Head of caudate nucleus (tissue), 42 donors: ENCODE measurements at regions of chr12 and their contacts with region 1.

Region 1: DNA sequence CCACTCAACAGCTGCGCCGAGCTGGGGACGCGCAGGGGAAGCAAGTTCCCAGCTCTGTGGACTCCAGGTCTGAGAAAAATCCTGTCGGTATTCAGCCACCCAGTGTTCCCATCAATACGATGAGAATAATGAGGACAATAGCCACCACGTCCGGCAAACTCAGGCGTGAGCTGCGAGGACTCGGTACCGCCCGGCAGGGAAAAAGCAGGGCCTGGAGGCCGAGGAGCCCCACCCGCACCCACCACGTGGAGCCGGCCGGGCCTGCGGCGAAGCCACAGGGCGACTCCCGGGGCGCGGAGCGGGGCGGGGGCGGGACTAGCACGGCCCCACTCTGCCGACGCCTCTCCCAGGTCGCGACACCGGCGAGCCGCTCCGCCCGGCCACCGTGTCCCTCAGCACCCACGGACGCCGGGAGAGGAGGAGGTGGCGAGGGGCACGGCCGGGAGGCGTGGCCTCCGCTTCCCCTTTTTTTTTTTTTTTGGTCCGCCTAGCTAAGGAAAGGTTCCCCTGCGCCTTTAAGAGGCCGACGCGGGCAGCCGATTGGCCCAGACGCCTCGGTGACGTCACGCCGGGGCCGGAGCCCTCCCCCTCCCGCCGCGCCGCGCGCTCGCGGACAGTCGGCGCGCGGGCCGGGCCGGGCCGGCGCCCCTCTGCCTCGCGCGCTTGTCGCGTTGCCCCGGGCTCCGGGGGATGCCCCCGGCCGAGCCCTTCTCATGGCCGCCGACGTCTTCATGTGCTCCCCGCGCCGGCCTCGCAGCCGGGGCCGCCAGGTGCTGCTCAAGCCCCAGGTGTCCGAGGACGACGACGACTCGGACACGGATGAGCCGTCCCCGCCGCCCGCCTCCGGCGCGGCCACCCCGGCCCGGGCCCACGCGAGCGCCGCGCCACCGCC is at the start of gene MLXIP:
- DNase-seq: peak; percentile 82 to 98 (median 96)

Region 2: DNA sequence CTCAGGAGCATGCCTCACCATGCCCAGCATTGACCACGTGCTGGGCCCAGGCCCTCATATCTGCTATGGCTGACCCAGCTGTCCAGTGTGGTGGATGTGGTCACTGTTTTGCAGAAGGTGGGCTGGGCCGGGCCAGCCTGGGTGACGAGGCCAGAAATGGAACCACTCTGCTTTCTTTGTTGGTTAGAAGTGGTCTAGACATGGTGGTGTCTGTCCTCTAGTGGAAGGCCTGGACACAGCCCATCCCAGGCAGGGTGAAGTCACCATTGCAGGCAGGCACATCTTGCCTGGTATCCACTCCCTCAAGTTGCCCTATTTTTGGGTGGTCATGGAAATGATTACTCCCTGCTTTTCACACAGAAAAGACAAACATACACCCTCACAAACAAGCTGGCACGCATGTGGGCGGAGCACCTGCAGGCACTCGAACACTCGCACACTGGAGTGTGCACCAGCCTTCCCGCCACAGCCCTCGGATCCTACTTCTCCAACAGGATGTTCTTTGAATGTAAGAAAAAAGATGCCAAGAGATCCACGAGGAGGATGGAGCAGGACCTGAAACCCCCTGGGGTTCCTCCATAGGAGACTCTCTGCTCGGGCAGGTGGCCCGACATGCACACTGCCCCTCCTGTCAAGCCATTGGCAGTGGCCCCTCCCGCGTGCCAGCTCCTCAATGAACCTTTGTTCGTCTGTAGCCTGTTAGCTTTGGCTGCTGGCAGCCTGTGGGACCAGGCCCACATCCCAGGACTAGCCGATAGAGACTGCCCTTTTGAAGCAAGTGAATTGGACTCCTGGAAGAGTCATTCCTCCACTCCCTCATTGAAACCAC is 38.5 kb after region 1 on chr12:
- intact Hi-C with region 1: loop called (anchors 5 kb)
- DNase-seq: peak; percentile 76 to 96 (median 92)